ENCODE measurements at regions of chr13 and their contacts with region 1.

Region 1: GRCh38 chr13:49777746-49778614 is 14.5 kb downstream of the KPNA3 start:
- DNase-seq: no peak

Region 2: DNA sequence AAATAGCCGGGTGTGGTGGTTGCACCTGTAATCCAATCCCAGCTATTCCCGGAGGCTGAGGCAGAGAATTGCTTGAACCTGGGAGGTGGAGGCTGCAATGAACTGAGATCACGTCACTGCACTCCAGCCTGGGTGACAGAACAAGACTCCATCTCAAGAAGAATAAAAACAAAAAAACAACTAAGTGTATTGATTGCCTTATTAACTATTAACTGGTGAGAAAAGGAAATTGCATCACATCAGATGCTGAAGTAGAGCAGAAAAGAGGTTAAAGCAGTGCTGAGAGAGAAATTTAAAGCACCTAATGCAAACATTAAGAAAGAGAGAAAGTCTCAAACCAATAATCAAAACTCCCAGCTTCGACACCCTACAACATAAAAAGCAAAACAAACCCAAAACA is 23.8 kb before region 1 on chr13:
- intact Hi-C with region 1: loop called (anchors 2 kb)
- DNase-seq: no peak

Measured in posterior cingulate gyrus (tissue), 11 donors.